GM23248 (cell line): ENCODE measurements at regions of chr7 and their contacts with region 1.

Region 1: DNA sequence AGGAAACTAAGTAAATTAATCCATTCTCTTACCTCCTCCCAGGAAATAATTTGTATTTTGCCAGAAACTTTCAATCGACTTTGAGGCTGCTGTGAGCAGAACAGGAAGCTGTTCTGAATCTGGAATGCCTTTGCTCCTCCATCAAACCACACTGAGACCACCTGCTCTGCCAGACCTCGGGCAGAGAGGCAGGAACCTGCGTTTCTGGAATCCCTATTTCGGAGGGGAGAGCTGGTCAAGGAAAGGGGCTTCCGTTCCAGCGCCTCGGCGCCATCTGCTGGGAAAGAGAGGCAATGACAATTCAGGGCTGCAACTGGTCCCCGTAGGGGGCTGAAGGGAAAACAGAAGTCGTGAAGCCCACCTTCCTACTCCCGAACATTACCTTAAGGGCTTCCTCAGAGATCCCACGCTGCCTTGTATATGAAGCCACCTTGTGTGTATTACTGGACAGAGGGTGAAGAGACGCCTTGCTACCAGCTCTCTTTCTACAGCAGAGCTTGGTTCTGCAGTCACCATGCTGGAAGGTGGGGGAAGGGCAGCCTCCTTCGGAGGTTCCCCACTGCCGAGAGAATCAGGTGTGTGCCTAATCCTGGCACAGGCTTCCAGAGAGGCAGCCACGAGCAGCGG is 31.2 kb downstream of the ZNF467 start:
- DNase-seq: peak; percentile 69
- H3K4me3 ChIP-seq: peak overlapping the region; percentile 70
- H3K27ac ChIP-seq: no peak overlapping the region
- H3K4me1 ChIP-seq: no peaks in the 10 kb centered on the region
- H3K27me3 ChIP-seq: peaks cover 12% of the 10 kb centered on the region

Region 2: GRCh38 chr7:149662591-149663095 is 79.5 kb before region 1 on chr7:
- in situ Hi-C with region 1: loop called (anchors 10 kb)
- DNase-seq: peak; percentile 72
- H3K4me3 ChIP-seq: no peak overlapping the region
- H3K27ac ChIP-seq: no peak overlapping the region
- H3K4me1 ChIP-seq: no peaks in the 10 kb centered on the region
- H3K27me3 ChIP-seq: peaks cover 38% of the 10 kb centered on the region